Vagina (tissue), 2 donors: ENCODE measurements at regions of chr6 and their contacts with region 1.

Region 1: GRCh38 chr6:137313928-137314855 is 95.0 kb upstream of the IFNGR1 start:
- DNase-seq: no peak
- H3K4me3 ChIP-seq: no peak overlapping the region
- H3K27ac ChIP-seq: no peak overlapping the region
- H3K4me1 ChIP-seq: peaks cover 5% of the 10 kb centered on the region
- H3K27me3 ChIP-seq: no peaks in the 10 kb centered on the region
- CTCF ChIP-seq: peak; percentile 42 to 86 (median 69)
- POLR2A ChIP-seq: no peak

Region 2: DNA sequence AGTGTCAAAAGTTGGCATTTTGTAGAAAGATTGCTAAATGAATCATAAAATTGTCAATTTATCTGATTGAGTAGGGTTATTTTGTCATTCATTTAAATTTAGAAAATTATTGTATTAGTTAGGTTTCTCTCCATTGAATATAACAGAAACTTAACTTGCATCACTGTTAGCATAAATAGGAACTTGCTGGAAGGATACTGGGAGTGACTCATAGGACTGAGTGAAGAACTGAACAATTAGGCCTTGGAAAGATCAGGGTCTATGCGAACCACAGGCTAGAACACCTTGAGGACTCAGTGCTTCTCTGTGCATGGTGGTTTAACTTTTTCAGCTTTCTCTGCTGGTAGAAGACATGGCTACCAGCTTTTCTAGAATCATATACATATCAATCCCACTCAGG is 27.3 kb before region 1 on chr6:
- intact Hi-C with region 1: loop called (anchors 2 kb)
- DNase-seq: no peak
- H3K4me3 ChIP-seq: no peak overlapping the region
- H3K27ac ChIP-seq: no peak overlapping the region
- H3K4me1 ChIP-seq: peaks cover 13% of the 10 kb centered on the region
- H3K27me3 ChIP-seq: no peaks in the 10 kb centered on the region
- CTCF ChIP-seq: no peak
- POLR2A ChIP-seq: no peak